ENCODE measurements at regions of chr16 and their contacts with region 1.

Region 1: GRCh38 chr16:3134564-3135417 is at the start of gene ZNF213:
- DNase-seq: peak; percentile 98
- ATAC-seq: peak; percentile 94
- H3K4me3 ChIP-seq: peak within 1 kb of the TSS; percentile 90 to 100 (median 97)
- H3K27ac ChIP-seq: peak within 1 kb of the TSS; percentile 93
- H3K4me1 ChIP-seq: peaks cover 25% of the 10 kb centered on the region
- H3K27me3 ChIP-seq: no peaks in the 10 kb centered on the region; a peak in 1 of 5 replicates
- CTCF ChIP-seq: no peak
- EP300 ChIP-seq: 0 out of 4 replicates have a peak, but pooled peaks of 1 of the 2 experiments have one; percentile 20
- POLR2A ChIP-seq: peak; percentile 79 to 84
- RAD21 ChIP-seq: no peak
- total RNA-seq, gene ZNF213: 0.97 and 1.2 TPM in 2 replicates

Region 2: DNA sequence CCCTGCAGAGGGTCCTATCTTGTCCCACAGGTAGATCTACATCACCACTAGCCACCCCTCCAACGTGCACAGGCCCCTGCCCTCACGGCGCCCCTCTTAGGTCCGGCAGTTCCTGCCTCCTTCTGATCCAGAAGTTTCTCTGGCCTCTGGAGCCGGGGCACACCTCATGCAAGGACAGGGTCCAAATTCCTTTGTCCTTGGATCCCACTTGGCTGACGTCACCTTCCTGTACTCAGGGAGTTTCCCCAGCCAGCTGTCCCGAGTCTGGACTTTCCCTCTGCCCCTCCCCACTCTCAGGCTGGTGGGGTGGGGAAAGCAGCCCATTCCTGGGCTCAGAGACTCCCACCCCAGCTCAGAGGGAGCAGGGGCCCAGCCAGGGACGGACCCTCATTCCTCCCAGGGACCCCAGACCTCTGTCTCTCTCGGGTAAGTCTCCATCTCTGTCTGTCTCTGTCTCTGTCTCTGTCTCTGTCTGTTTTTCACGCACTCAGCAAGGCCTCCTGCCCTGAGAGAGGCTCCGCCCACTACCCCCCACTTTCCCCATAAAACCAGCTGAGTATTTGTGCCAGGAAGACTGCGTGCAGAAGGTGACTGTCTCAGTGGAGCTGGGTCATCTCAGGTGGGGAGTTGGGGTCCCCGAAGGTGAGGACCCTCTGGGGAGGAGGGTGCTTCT is 69.6 kb before region 1 on chr16 and contains the start of gene IL32:
- CTCF ChIA-PET with region 1: no interaction called
- POLR2A ChIA-PET with region 1: interaction called, 14 read pairs
- in situ Hi-C with region 1: no loop called
- intact Hi-C with region 1: no loop called
- DNase-seq: peak; percentile 87
- ATAC-seq: peak; percentile 77
- H3K4me3 ChIP-seq: peak within 1 kb of the TSS; percentile 57 to 90 (median 71)
- H3K27ac ChIP-seq: peak within 1 kb of the TSS; percentile 82
- H3K4me1 ChIP-seq: peaks cover 37% of the 10 kb centered on the region
- H3K27me3 ChIP-seq: no peaks in the 10 kb centered on the region; a peak in 2 of 5 replicates
- CTCF ChIP-seq: 0 out of 2 replicates have a peak, but pooled peaks have one; percentile 8
- EP300 ChIP-seq: peak in 1 of 2 experiments; percentile 59; a peak in 2 of 4 replicates
- POLR2A ChIP-seq: peak; percentile 72 to 75
- RAD21 ChIP-seq: no peak
- total RNA-seq, gene IL32: 115 and 127 TPM in 2 replicates

Region 3: GRCh38 chr16:3118204-3118806 is 16.5 kb before region 1 on chr16:
- CTCF ChIA-PET with region 1: no interaction called
- POLR2A ChIA-PET with region 1: interaction called, 11 read pairs
- in situ Hi-C with region 1: no loop called
- intact Hi-C with region 1: no loop called
- DNase-seq: no peak
- ATAC-seq: no peak
- H3K4me3 ChIP-seq: no peak overlapping the region
- H3K27ac ChIP-seq: no peak overlapping the region
- H3K4me1 ChIP-seq: peaks cover 14% of the 10 kb centered on the region
- H3K27me3 ChIP-seq: no peaks in the 10 kb centered on the region
- CTCF ChIP-seq: no peak
- EP300 ChIP-seq: no peak
- POLR2A ChIP-seq: no peak
- RAD21 ChIP-seq: no peak

Region 4: DNA sequence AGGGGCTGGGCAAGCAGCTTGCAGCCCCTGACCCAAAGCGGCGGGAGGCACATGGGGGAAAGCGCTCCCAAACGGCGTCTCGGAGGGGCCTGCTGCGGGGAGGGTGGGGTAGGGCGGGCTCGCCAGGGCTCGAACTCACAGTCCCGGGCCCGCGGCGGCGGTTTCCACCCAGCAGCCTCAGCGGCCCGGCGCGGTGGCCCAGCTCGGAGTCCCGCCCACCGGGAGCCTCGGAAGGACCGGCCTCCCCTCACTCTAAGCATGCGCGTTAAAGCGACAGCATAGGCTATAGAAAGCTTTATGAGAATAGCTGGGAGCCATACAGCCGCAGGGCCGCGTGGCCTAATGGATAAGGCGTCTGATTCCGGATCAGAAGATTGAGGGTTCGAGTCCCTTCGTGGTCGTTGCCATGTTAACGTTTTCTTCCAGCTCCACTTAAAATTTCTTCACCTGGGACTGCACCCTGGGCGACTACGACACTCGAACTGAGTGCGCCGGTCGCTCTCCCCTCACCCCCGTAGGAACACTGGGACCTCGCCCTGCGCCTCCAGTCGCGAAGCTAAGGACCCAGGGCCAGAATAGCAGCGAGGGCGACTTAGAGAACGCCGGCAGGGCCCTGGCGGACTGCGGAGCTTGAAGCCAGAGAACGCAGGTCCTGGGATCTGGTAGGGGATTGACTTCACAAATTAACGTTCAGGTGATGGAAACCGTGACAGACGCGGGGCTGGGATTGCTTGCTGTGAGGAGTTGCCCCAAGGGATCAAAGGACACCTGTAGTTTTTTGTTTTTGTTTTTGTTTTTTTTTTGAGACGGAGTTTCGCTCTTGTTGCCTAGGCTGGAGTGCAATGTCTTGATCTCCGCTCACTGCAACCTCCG is 15.8 kb after region 1 on chr16:
- CTCF ChIA-PET with region 1: interaction called, 3 read pairs
- POLR2A ChIA-PET with region 1: interaction called, 81 read pairs
- in situ Hi-C with region 1: no loop called
- intact Hi-C with region 1: loop called (anchors 2 kb)
- DNase-seq: peak; percentile 94
- ATAC-seq: peak; percentile 75
- H3K4me3 ChIP-seq: peak overlapping the region; percentile 57 to 78 (median 66)
- H3K27ac ChIP-seq: peak overlapping the region; percentile 46
- H3K4me1 ChIP-seq: peaks cover 43% of the 10 kb centered on the region
- H3K27me3 ChIP-seq: peaks cover 0 to 26% of the 10 kb centered on the region in 2 experiments; a peak in 3 of 5 replicates
- CTCF ChIP-seq: 0 out of 2 replicates have a peak, but pooled peaks have one; percentile 20
- EP300 ChIP-seq: no peak
- POLR2A ChIP-seq: no peak
- RAD21 ChIP-seq: peak; percentile 42; the same call in 1 of the 2 replicates

Region 5: DNA sequence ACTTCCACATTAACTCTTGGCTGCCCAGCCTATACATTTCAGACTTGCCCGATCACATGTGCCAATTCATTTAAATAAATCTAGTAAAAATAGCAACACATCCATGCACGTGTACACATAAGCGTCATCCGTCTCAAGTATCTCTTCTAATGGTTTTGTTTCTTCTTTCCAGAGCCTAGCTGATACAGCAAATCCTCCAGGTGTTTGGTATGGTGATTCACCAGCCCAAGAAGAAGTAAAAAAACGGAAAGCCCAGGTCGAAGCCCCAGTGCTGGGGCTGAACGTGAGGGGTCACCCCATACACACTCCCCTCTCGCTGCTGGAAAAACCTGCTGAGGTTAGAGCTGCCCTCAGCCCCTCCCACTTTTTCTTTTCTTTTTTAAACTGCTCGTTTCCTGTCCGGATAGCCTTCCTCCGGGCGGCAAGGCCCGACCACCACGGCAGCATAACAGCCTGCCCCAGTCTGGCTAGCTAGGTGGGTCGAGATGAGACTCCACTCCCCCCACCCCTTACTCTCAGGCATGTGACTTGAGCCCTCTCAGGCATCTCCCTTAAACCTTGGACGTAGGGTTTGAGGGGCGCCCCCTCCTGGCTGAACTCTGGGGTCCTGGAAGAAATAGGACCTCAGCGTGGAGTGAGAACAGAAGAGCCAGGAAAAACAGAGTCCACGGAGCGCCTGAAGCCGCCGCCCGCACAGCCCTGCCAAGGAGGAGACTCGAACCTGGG is 39.3 kb after region 1 on chr16:
- CTCF ChIA-PET with region 1: no interaction called
- POLR2A ChIA-PET with region 1: interaction called, 6 read pairs
- in situ Hi-C with region 1: no loop called
- intact Hi-C with region 1: loop called (anchors 5 kb)
- DNase-seq: peak; percentile 65
- ATAC-seq: no peak
- H3K4me3 ChIP-seq: peak overlapping the region; percentile 5 to 71 (median 50)
- H3K27ac ChIP-seq: no peak overlapping the region
- H3K4me1 ChIP-seq: peaks cover 50% of the 10 kb centered on the region
- H3K27me3 ChIP-seq: peaks cover 0 to under 1% of the 10 kb centered on the region in 2 experiments; a peak in 1 of 5 replicates
- CTCF ChIP-seq: peak; percentile 72
- EP300 ChIP-seq: no peak
- POLR2A ChIP-seq: no peak
- RAD21 ChIP-seq: no peak

Region 6: GRCh38 chr16:4976079-4976478 is 1841.3 kb after region 1 on chr16:
- CTCF ChIA-PET with region 1: no interaction called
- POLR2A ChIA-PET with region 1: no interaction called
- in situ Hi-C with region 1: no loop called
- intact Hi-C with region 1: no loop called
- DNase-seq: no peak
- ATAC-seq: no peak; the same call in 1 of the 3 replicates
- H3K4me3 ChIP-seq: no peak overlapping the region
- H3K27ac ChIP-seq: no peak overlapping the region
- H3K4me1 ChIP-seq: peaks cover 23% of the 10 kb centered on the region
- H3K27me3 ChIP-seq: peaks cover 2 to 20% of the 10 kb centered on the region in 2 experiments; a peak in 4 of 5 replicates
- CTCF ChIP-seq: no peak
- EP300 ChIP-seq: no peak
- POLR2A ChIP-seq: no peak
- RAD21 ChIP-seq: no peak